B cell (primary cell): ENCODE measurements at regions of chr3 and their contacts with region 1.

Region 1: GRCh38 chr3:16048435-16049318 is 125.8 kb upstream of the GALNT15 start:
- DNase-seq: peak; percentile 56
- ATAC-seq: peak; percentile 81
- H3K4me3 ChIP-seq: no peak overlapping the region
- H3K4me3 Mint-ChIP-seq: peak overlapping the region; percentile 35
- H3K27ac ChIP-seq: no peak overlapping the region
- H3K27ac Mint-ChIP-seq: no peak overlapping the region
- H3K4me1 ChIP-seq: no peaks in the 10 kb centered on the region
- H3K4me1 Mint-ChIP-seq: no peaks in the 10 kb centered on the region
- H3K27me3 ChIP-seq: no peaks in the 10 kb centered on the region
- H3K27me3 Mint-ChIP-seq: peaks cover 6% of the 10 kb centered on the region
- CTCF ChIP-seq: peak; percentile 82

Region 2: GRCh38 chr3:15753056-15753710 is 295.5 kb before region 1 on chr3:
- CTCF ChIA-PET with region 1: no interaction called
- POLR2A ChIA-PET with region 1: no interaction called
- intact Hi-C with region 1: no loop called
- DNase-seq: no peak
- ATAC-seq: no peak
- H3K4me3 ChIP-seq: no peak overlapping the region
- H3K4me3 Mint-ChIP-seq: no peak overlapping the region
- H3K27ac ChIP-seq: no peak overlapping the region
- H3K27ac Mint-ChIP-seq: no peak overlapping the region
- H3K4me1 ChIP-seq: no peaks in the 10 kb centered on the region
- H3K4me1 Mint-ChIP-seq: peaks cover 12% of the 10 kb centered on the region
- H3K27me3 ChIP-seq: no peaks in the 10 kb centered on the region
- H3K27me3 Mint-ChIP-seq: no peaks in the 10 kb centered on the region
- CTCF ChIP-seq: no peak

Region 3: DNA sequence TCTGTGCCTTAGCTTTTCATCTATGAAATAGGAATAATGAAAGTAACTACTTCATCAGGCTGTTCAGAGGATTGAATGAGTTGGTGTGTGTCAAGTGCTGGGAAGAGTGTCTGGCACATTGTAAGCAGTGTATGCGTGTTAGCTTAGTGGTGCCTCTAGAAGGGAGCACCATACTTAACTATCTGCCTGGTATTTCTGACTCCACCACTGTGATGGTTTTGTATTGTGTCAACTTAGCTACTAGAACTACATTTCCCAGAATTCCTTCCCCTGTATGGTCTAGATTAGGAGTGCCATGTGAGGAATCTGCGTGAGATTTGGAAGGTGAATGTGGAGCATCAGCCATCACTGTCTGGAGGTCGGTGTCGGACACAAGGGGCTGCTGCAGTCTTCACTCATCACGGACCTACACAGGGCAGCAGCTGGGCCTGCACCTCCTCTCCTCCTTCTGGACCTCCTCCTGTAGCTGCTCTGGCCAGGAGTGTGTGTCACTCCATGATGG is 10.5 kb after region 1 on chr3:
- CTCF ChIA-PET with region 1: interaction called, 11 read pairs
- POLR2A ChIA-PET with region 1: no interaction called
- intact Hi-C with region 1: no loop called
- DNase-seq: no peak
- ATAC-seq: no peak
- H3K4me3 ChIP-seq: no peak overlapping the region
- H3K4me3 Mint-ChIP-seq: no peak overlapping the region
- H3K27ac ChIP-seq: no peak overlapping the region
- H3K27ac Mint-ChIP-seq: no peak overlapping the region
- H3K4me1 ChIP-seq: no peaks in the 10 kb centered on the region
- H3K4me1 Mint-ChIP-seq: no peaks in the 10 kb centered on the region
- H3K27me3 ChIP-seq: no peaks in the 10 kb centered on the region
- H3K27me3 Mint-ChIP-seq: peaks cover 24% of the 10 kb centered on the region
- CTCF ChIP-seq: no peak

Region 4: GRCh38 chr3:16200411-16200810 is 151.7 kb after region 1 on chr3:
- CTCF ChIA-PET with region 1: no interaction called
- POLR2A ChIA-PET with region 1: no interaction called
- intact Hi-C with region 1: no loop called
- DNase-seq: no peak
- ATAC-seq: no peak
- H3K4me3 ChIP-seq: no peak overlapping the region
- H3K4me3 Mint-ChIP-seq: no peak overlapping the region
- H3K27ac ChIP-seq: no peak overlapping the region
- H3K27ac Mint-ChIP-seq: no peak overlapping the region
- H3K4me1 ChIP-seq: no peaks in the 10 kb centered on the region
- H3K4me1 Mint-ChIP-seq: no peaks in the 10 kb centered on the region
- H3K27me3 ChIP-seq: peaks cover 0 to 3% (median 1%) of the 10 kb centered on the region in 4 experiments
- H3K27me3 Mint-ChIP-seq: peaks cover 3% of the 10 kb centered on the region
- CTCF ChIP-seq: no peak